ENCODE measurements at regions of chr19 and their contacts with region 1.

Region 1: DNA sequence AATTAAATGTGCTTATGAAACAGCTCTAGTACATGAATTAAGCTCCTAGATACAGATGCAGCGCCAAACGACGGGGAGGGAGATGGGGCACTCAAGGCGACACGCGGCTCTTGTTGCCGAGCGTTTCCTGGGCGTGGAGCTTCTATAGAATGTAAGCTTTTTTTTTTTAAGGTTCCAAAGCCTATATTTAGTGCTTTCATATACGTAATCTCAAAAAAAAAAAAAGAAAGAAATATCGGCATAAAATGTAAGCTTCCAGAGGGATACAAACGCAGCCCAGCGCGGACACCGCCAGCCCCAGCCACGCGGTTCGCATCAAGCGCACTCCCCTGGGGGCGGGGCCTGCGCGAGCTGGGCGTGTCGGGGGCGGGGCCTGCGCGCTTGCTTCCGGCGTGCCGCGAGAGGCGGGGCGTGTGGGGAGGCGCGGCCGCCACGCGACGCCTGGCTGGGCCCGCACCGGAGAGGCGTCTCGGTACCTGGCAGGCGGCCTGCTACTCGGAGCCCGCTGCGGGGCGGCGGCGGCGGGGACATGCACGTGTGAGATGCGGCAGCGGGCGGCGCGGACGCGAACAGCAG is at the start of gene URI1:
- DNase-seq: peak; percentile 89 to 93 (median 92)
- H3K4me3 ChIP-seq: peak within 1 kb of the TSS; percentile 95
- H3K4me3 Mint-ChIP-seq: peak within 1 kb of the TSS; percentile 94 to 97 (median 95)
- H3K27ac ChIP-seq: peak within 1 kb of the TSS; percentile 74
- H3K27ac Mint-ChIP-seq: peak within 1 kb of the TSS; percentile 89 to 99 (median 94)
- H3K4me1 ChIP-seq: peaks cover 48% of the 10 kb centered on the region
- H3K4me1 Mint-ChIP-seq: peaks cover 40 to 53% (median 53%) of the 10 kb centered on the region in 3 donors
- H3K27me3 ChIP-seq: no peaks in the 10 kb centered on the region
- H3K27me3 Mint-ChIP-seq: peaks cover 2 to 14% of the 10 kb centered on the region in 2 donors
- total RNA-seq, gene URI1: 71.6 to 76.9 TPM

Region 2: GRCh38 chr19:29966588-29967249 is 24.8 kb after region 1 on chr19:
- CTCF ChIA-PET with region 1: interaction called, 10 read pairs
- POLR2A ChIA-PET with region 1: no interaction called
- DNase-seq: no peak
- H3K4me3 ChIP-seq: no peak overlapping the region
- H3K4me3 Mint-ChIP-seq: peak overlapping the region in 3 of 7 donors; percentile 28 to 69 (median 53)
- H3K27ac ChIP-seq: no peak overlapping the region
- H3K27ac Mint-ChIP-seq: peak overlapping the region in 5 of 8 donors; percentile 5 to 64 (median 23)
- H3K4me1 ChIP-seq: peaks cover 62% of the 10 kb centered on the region
- H3K4me1 Mint-ChIP-seq: peaks cover 85 to 95% (median 94%) of the 10 kb centered on the region in 3 donors
- H3K27me3 ChIP-seq: no peaks in the 10 kb centered on the region
- H3K27me3 Mint-ChIP-seq: no peaks in the 10 kb centered on the region

Region 3: DNA sequence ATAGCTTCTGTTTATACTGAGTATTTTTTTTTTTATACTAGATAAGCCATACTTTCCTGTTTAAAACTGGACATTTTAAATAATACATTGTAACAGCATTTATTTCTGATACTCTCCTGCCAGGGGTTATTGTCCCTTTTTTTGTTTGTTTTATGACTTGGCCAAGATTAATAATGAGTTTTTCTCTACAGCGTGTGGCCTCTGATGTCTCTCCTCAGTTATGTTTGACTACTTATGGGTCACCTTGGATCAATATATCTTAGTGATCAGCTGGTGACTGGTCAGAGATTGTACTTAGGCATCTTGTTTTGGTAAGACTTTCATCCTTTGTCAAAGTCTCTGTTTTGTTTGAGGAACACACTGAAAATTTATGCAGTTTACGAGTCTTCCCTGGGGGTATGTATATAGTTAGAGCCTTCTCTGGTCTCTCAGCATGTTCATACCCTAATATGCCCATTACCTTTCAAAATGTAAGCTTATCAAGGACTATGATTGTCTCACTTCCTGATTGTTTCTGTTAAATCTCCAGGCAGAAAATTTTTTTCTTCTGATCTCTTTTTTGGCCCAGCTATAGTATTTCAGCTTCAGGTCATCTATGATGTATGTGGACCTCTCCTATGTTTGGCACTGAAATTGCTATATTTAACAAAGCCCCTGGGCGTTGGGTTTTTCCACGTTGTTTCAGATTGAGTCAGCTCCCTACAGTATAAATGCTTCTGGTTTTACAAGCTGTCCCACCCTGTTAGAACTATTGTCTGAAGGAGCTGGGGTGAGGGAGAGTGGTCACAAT is 88.0 kb after region 1 on chr19:
- CTCF ChIA-PET with region 1: no interaction called
- POLR2A ChIA-PET with region 1: no interaction called
- DNase-seq: no peak
- H3K4me3 ChIP-seq: no peak overlapping the region
- H3K4me3 Mint-ChIP-seq: no peak overlapping the region
- H3K27ac ChIP-seq: no peak overlapping the region
- H3K27ac Mint-ChIP-seq: no peak overlapping the region
- H3K4me1 ChIP-seq: no peaks in the 10 kb centered on the region
- H3K4me1 Mint-ChIP-seq: peaks cover 25 to 51% (median 27%) of the 10 kb centered on the region in 3 donors
- H3K27me3 ChIP-seq: no peaks in the 10 kb centered on the region
- H3K27me3 Mint-ChIP-seq: no peaks in the 10 kb centered on the region